K562 (cell line): ENCODE measurements at regions of chr5 and their contacts with region 1.

Region 1: DNA sequence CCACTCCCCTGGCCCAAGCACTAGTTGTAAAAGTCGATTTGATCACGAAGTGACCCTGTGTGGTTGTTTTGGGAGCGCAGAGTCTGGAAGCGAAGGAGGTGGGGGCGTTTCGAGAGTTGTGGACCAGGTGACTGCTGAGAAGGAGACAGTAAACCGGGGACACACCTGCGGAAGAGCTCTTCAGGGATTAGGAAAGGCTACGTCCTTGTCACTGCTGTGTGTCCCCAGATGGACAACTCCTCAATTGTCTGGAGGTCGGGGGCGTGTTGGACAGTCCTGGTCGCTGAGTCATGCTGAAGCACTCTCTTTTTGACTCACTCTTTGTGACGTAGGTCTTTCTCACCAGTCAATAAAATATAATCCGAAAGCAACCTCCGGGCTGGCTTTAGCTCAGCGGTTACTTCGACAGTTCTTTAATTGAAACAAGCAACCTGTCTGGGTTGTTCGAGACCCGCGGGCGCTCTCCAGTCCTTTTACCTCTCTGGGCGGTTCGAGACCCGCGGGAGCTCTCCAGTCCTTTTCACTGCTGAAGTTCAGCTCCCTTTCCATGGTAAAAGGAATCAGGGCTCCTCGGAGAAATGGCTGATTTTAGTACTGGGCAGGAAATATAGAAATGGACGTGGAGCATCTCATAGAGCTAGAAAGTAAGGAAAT is 10.8 kb downstream of the ZMAT2 start:
- DNase-seq: peak; percentile 82 to 96 (median 85)
- ATAC-seq: peak; percentile 92
- H3K4me3 ChIP-seq: peak overlapping the region; percentile 68
- H3K27ac ChIP-seq: peak overlapping the region; percentile 99
- H3K4me1 ChIP-seq: peaks cover 0 to 10% of the 10 kb centered on the region in 2 experiments; a peak in 4 of 5 replicates
- H3K27me3 ChIP-seq: no peaks in the 10 kb centered on the region
- CTCF ChIP-seq: no peak
- EP300 ChIP-seq: peak; percentile 88
- POLR2A ChIP-seq: peak; percentile 75
- RAD21 ChIP-seq: no peak; a peak in 1 of 4 replicates

Region 2: GRCh38 chr5:140182803-140183367 is 528.1 kb before region 1 on chr5:
- CTCF ChIA-PET with region 1: no interaction called
- POLR2A ChIA-PET with region 1: no interaction called
- in situ Hi-C with region 1: no loop called
- intact Hi-C with region 1: loop called (anchors 10 kb)
- DNase-seq: peak in 2 of 4 experiments; percentile 44 to 61
- ATAC-seq: peak; percentile 54
- H3K4me3 ChIP-seq: no peak overlapping the region
- H3K27ac ChIP-seq: peak overlapping the region; percentile 34
- H3K4me1 ChIP-seq: peaks cover 49 to 84% of the 10 kb centered on the region in 2 experiments
- H3K27me3 ChIP-seq: no peaks in the 10 kb centered on the region
- CTCF ChIP-seq: no peak
- EP300 ChIP-seq: no peak
- POLR2A ChIP-seq: no peak
- RAD21 ChIP-seq: no peak

Region 3: DNA sequence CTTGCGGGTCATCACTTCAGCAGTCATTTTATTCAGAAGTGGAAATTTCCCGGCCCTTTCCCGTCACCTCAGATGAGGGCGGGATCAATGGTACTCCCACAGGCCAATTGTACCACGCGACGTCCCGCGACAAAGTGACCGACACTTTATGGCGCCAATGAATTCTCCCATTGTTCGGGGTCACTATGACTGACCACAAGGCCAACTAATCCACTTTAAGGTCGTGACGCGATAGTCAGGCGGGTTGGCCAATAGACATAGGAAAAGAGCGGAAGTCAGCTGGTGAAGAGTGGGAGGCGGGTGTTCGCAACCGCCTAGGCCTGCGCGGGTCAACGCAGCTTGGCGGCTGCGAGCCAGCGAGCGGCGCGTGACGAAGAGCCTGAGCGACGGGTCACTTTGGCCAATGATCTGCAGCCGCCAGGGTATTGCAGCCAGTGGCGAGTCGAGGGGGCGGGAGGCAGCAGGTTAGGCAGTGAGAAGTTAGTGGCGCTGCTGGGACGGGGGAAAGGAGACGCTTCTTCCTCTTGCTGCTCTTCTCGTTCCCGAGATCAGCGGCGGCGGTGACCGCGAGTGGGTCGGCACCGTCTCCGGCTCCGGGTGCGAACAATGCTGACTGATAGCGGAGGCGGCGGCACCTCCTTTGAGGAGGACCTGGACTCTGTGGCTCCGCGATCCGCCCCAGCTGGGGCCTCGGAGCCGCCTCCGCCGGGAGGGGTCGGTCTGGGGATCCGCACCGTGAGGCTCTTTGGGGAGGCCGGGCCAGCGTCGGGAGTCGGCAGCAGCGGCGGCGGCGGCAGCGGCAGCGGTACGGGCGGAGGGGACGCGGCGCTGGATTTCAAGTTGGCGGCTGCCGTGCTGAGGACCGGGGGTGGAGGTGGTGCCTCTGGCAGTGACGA is 309.4 kb before region 1 on chr5 and contains the start of gene ANKHD1:
- CTCF ChIA-PET with region 1: no interaction called
- POLR2A ChIA-PET with region 1: interaction called, 6 read pairs
- in situ Hi-C with region 1: no loop called
- intact Hi-C with region 1: loop called (anchors 2 kb)
- DNase-seq: peak; percentile 91 to 100 (median 94)
- ATAC-seq: peak; percentile 83
- H3K4me3 ChIP-seq: peak within 1 kb of the TSS; percentile 100
- H3K27ac ChIP-seq: peak within 1 kb of the TSS; percentile 97
- H3K4me1 ChIP-seq: peaks cover 12 to 18% of the 10 kb centered on the region in 2 experiments; a peak in 4 of 5 replicates
- H3K27me3 ChIP-seq: no peaks in the 10 kb centered on the region
- CTCF ChIP-seq: peak in 1 of 3 experiments; percentile 15; a peak in 1 of 6 replicates
- EP300 ChIP-seq: no peak
- POLR2A ChIP-seq: peak; percentile 90
- RAD21 ChIP-seq: no peak; a peak in 1 of 4 replicates
- polyA plus RNA-seq, gene ANKHD1: 38.9 to 39.0 TPM

Region 4: DNA sequence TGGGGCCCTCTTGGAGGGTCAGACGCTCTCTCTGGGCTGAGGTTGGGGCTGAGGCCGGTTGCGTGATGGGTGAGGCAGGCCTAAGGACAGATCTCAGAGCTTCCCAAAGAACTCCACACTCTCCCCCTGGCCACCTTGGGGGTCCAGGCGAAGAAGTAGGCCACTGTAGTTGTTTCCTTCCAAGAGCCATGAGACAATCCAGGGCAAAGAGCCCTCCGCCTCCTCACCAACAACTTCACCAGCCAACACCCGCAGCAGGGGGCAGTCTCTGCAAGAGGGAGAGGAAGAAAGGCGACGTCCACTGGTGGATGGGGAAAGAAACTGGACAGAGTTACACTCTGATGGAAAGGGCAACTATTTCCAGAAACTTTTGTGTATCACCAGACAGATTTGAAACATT is 135.7 kb before region 1 on chr5:
- CTCF ChIA-PET with region 1: no interaction called
- POLR2A ChIA-PET with region 1: interaction called, 4 read pairs
- in situ Hi-C with region 1: no loop called
- intact Hi-C with region 1: loop called (anchors 1 kb)
- DNase-seq: peak in 3 of 4 experiments; percentile 42 to 70 (median 61)
- ATAC-seq: peak; percentile 92
- H3K4me3 ChIP-seq: no peak overlapping the region
- H3K27ac ChIP-seq: no peak overlapping the region
- H3K4me1 ChIP-seq: peaks cover 8 to 10% of the 10 kb centered on the region in 2 experiments; a peak in 3 of 5 replicates
- H3K27me3 ChIP-seq: no peaks in the 10 kb centered on the region
- CTCF ChIP-seq: peak; percentile 74 to 95 (median 82)
- EP300 ChIP-seq: no peak
- POLR2A ChIP-seq: no peak
- RAD21 ChIP-seq: peak; percentile 36 to 86; a peak in 3 of 4 replicates

Region 5: GRCh38 chr5:140647042-140647341 is 64.0 kb before region 1 on chr5:
- CTCF ChIA-PET with region 1: no interaction called
- POLR2A ChIA-PET with region 1: interaction called, 14 read pairs
- in situ Hi-C with region 1: no loop called
- intact Hi-C with region 1: no loop called
- DNase-seq: no peak
- ATAC-seq: peak; percentile 52
- H3K4me3 ChIP-seq: peak overlapping the region; percentile 96
- H3K27ac ChIP-seq: peak overlapping the region; percentile 95
- H3K4me1 ChIP-seq: peaks cover 4 to 10% of the 10 kb centered on the region in 2 experiments; a peak in 3 of 5 replicates
- H3K27me3 ChIP-seq: no peaks in the 10 kb centered on the region; a peak in 1 of 5 replicates
- CTCF ChIP-seq: no peak
- EP300 ChIP-seq: no peak
- POLR2A ChIP-seq: no peak
- RAD21 ChIP-seq: no peak

Region 6: GRCh38 chr5:140690941-140691924 is 19.8 kb before region 1 on chr5 and contains the starts of genes HARS1 and HARS2:
- CTCF ChIA-PET with region 1: no interaction called
- POLR2A ChIA-PET with region 1: interaction called, 29 read pairs
- in situ Hi-C with region 1: no loop called
- intact Hi-C with region 1: no loop called
- DNase-seq: peak; percentile 86 to 95 (median 90)
- ATAC-seq: peak; percentile 98
- H3K4me3 ChIP-seq: peak within 1 kb of the TSS; percentile 68
- H3K27ac ChIP-seq: peak within 1 kb of the TSS; percentile 80
- H3K4me1 ChIP-seq: peaks cover 5 to 14% of the 10 kb centered on the region in 2 experiments; a peak in 3 of 5 replicates
- H3K27me3 ChIP-seq: no peaks in the 10 kb centered on the region
- CTCF ChIP-seq: no peak
- EP300 ChIP-seq: peak; percentile 51; the same call in 1 of the 2 replicates
- POLR2A ChIP-seq: peak; percentile 98
- RAD21 ChIP-seq: peak; percentile 9 to 10; a peak in 1 of 4 replicates
- polyA plus RNA-seq, gene HARS1: 13.5 to 19.1 TPM
- polyA plus RNA-seq, gene HARS2: 8.5 to 18.0 TPM